B cell (primary cell): ENCODE measurements at regions of chr18 and their contacts with region 1.

Region 1: DNA sequence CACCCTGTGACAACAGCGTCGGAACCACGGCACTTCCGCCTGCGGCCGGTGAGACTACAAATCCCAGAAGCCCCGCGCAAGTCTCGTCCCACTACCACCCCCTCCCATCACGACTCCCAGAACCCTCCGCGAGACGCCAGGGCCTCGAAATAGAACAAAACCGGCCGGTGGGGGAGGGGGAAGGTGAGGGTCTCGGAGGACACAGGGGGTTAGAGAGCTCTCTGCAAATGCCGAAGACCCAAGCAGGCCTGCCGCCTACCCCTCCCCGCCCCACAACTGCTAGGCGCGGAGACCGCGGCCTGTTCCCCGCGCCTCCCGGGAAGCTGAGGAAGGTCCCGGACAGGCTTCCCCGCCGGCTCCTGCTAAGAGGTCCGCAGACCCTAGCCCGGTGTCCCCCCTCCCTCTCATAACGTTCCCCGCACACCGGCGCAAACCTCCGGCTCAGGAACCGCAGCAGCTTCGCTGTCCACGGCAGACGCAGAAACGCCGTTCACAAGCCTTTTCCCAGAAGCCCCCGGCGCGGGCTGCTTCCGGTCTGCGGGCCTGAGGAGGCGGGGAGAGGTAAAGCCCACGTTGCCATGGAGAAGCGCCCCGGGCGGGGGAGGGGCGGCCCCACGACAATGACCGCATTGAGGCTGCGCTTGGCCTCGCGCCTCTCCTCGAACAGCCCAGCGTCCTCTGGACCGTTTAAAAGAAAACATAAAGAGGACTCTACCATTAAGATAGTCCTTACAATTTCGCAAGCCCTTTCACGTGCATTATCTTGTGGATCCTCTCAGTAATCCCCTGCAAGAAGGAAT is at the start of gene ZNF24:
- DNase-seq: peak; percentile 96
- ATAC-seq: peak; percentile 84
- H3K4me3 ChIP-seq: peak within 1 kb of the TSS; percentile 84 to 99 (median 97)
- H3K4me3 Mint-ChIP-seq: peak within 1 kb of the TSS; percentile 100
- H3K27ac ChIP-seq: peak within 1 kb of the TSS; percentile 99
- H3K27ac Mint-ChIP-seq: peak within 1 kb of the TSS; percentile 99
- H3K4me1 ChIP-seq: peaks cover 24 to 35% of the 10 kb centered on the region in 2 donors
- H3K4me1 Mint-ChIP-seq: peaks cover 64% of the 10 kb centered on the region
- H3K27me3 ChIP-seq: no peaks in the 10 kb centered on the region
- H3K27me3 Mint-ChIP-seq: no peaks in the 10 kb centered on the region
- CTCF ChIP-seq: no peak
- total RNA-seq, gene ZNF24: 80.1 and 83.7 TPM in 2 replicates

Region 2: GRCh38 chr18:35240664-35241447 is 103.3 kb before region 1 on chr18 and contains the start of gene ZNF397:
- CTCF ChIA-PET with region 1: interaction called, 10 read pairs
- POLR2A ChIA-PET with region 1: interaction called, 12 read pairs
- intact Hi-C with region 1: loop called (anchors 1 kb)
- DNase-seq: peak; percentile 97
- ATAC-seq: peak; percentile 98
- H3K4me3 ChIP-seq: peak within 1 kb of the TSS; percentile 79 to 95 (median 91)
- H3K4me3 Mint-ChIP-seq: peak within 1 kb of the TSS; percentile 91
- H3K27ac ChIP-seq: peak within 1 kb of the TSS; percentile 97
- H3K27ac Mint-ChIP-seq: peak within 1 kb of the TSS; percentile 99
- H3K4me1 ChIP-seq: peaks cover 10 to 12% of the 10 kb centered on the region in 2 donors
- H3K4me1 Mint-ChIP-seq: peaks cover 29% of the 10 kb centered on the region
- H3K27me3 ChIP-seq: no peaks in the 10 kb centered on the region
- H3K27me3 Mint-ChIP-seq: no peaks in the 10 kb centered on the region
- CTCF ChIP-seq: no peak
- total RNA-seq, gene ZNF397: 63.0 and 67.2 TPM in 2 replicates

Region 3: DNA sequence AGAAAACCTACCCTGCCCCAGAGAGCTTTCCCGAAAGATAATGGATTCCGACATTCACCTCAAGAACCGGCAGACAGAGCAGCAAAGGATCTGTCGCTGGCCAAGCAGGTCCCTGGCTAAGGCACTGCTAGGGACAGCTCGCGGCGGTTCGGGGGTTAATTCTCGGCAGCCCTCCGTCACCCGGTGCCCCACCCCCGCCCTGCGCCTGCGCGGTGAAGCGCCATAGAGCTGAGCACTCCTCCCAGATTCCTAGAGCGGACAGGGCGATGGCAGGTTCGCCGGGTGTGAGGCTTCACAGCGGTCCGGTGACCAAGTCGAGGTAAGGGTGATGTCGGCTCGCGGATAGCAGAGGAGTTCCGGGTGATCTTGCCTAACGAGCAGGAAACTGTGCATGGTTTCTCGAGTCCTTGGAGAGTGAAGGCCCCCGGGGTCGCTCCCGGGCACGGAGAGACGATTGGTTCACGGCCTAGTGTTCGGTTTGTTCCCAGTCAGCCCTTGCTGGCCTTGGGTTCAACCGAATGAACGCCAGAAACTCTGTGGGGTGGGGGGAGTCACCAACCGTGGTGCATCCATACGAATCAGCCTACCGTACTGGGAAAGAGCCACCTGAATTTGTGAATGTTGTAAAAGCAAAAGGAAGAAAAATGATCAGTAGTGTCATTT is 53.9 kb before region 1 on chr18 and contains the start of gene ZSCAN30:
- CTCF ChIA-PET with region 1: interaction called, 7 read pairs
- POLR2A ChIA-PET with region 1: interaction called, 6 read pairs
- intact Hi-C with region 1: loop called (anchors 1 kb)
- DNase-seq: peak; percentile 97
- ATAC-seq: peak; percentile 99
- H3K4me3 ChIP-seq: peak within 1 kb of the TSS; percentile 85 to 94 (median 90)
- H3K4me3 Mint-ChIP-seq: peak within 1 kb of the TSS; percentile 100
- H3K27ac ChIP-seq: peak within 1 kb of the TSS; percentile 80 to 86
- H3K27ac Mint-ChIP-seq: peak within 1 kb of the TSS; percentile 98
- H3K4me1 ChIP-seq: peaks cover 14 to 16% of the 10 kb centered on the region in 2 donors
- H3K4me1 Mint-ChIP-seq: peaks cover 45% of the 10 kb centered on the region
- H3K27me3 ChIP-seq: no peaks in the 10 kb centered on the region
- H3K27me3 Mint-ChIP-seq: no peaks in the 10 kb centered on the region
- CTCF ChIP-seq: no peak
- total RNA-seq, gene ZSCAN30: 32.0 and 37.3 TPM in 2 replicates

Region 4: DNA sequence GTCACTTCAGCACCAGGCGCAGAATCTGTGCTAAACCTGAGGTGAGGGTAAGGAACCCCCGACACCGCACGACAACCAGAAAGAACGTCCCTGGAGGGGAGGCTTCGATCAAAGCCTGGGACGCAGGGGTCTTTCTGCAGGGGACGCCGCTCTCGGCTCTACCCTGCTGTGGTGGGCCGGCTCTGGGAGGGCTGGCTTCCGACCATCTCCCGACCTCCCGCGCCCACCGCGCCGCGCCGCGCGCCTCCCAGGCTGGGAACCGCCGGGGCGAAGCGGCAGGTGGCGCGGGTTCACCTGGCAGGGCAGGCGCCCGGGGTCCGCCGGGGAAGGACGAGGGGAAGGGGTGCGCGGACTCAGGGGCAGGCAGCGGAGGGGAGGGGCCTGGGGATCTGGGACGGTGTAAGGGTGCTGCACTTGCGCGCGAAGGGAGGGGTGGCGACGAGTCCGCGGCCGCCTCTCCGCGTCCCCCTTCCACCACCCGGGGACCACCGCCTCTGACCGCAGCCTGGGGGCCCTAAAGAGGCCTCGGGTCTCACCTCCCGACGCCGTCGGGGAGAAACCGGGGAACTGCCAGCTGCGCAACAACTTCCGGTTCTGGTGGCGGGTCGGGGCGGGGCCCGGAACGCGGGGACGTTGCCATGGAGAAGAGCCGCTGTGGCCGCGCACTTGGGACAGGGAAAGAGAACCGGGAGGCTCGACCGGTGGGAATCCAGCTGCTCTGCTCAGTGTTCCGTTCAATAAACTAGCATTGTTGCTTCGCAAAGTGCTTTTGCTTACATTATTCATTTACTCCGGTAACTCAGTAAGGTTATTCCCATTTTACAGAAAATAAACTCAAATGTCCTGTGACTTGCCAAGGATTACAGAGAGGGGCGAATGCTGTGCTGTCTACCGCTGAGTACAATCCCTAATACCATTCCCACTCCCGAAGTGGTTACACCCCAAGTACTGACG is 32.9 kb after region 1 on chr18 and contains the start of gene ZNF396:
- CTCF ChIA-PET with region 1: no interaction called
- POLR2A ChIA-PET with region 1: interaction called, 3 read pairs
- intact Hi-C with region 1: loop called (anchors 1 kb)
- DNase-seq: peak; percentile 82
- ATAC-seq: peak; percentile 69
- H3K4me3 ChIP-seq: peak within 1 kb of the TSS; percentile 63 to 88 (median 70)
- H3K4me3 Mint-ChIP-seq: peak within 1 kb of the TSS; percentile 93
- H3K27ac ChIP-seq: peak within 1 kb of the TSS in 1 of 2 donors; percentile 69
- H3K27ac Mint-ChIP-seq: peak within 1 kb of the TSS; percentile 88
- H3K4me1 ChIP-seq: peaks cover 7 to 10% of the 10 kb centered on the region in 2 donors
- H3K4me1 Mint-ChIP-seq: peaks cover 8% of the 10 kb centered on the region
- H3K27me3 ChIP-seq: no peaks in the 10 kb centered on the region
- H3K27me3 Mint-ChIP-seq: no peaks in the 10 kb centered on the region
- CTCF ChIP-seq: no peak
- total RNA-seq, gene ZNF396: 3.2 and 4.8 TPM in 2 replicates